AG04450 (cell line): ENCODE measurements at regions of chr10 and their contacts with region 1.

Region 1: DNA sequence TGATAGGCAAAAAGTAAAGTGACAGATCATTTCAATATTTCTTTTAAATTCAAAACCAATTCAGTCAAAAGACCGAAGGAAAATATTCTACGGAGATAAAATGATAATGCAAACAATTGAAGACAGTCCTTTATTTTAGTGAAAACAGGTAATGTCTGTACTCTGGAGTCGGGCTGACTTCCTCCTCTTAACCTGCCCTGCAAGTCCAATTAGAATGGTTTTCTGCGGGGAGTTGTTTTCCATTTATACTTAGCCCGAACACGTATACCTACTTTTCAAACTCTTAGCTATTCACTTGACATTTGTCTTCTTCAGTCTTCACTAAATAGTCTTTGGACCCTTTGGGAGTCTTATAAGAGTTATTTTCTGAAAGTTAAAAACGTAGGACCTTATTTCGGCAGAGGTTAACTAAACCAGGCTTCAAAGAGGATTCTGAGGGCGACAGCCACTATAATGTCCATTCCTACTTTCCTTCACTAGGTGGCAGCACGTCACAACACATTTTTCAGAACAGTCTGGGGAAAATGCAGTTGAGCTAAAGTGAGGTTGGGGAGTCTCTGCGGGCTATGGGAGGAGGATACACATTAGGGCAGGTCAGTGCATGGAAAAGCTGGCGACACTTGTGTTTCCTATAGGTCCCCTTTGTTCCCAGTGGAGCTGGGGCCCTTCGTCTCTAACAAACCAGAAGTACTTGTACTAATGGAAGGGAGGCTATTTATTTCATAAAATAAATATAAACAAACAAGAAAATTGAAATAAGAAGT is 472.0 kb downstream of the KCNMA1 start:
- DNase-seq: no peak
- H3K4me3 ChIP-seq: no peak overlapping the region
- H3K27ac ChIP-seq: no peak overlapping the region
- H3K27me3 ChIP-seq: no peaks in the 10 kb centered on the region
- CTCF ChIP-seq: peak; percentile 79

Region 2: GRCh38 chr10:76411729-76412435 is 753.7 kb before region 1 on chr10:
- CTCF ChIA-PET with region 1: no interaction called
- POLR2A ChIA-PET with region 1: no interaction called
- DNase-seq: no peak
- H3K4me3 ChIP-seq: no peak overlapping the region
- H3K27ac ChIP-seq: no peak overlapping the region
- H3K27me3 ChIP-seq: no peaks in the 10 kb centered on the region
- CTCF ChIP-seq: no peak

Region 3: DNA sequence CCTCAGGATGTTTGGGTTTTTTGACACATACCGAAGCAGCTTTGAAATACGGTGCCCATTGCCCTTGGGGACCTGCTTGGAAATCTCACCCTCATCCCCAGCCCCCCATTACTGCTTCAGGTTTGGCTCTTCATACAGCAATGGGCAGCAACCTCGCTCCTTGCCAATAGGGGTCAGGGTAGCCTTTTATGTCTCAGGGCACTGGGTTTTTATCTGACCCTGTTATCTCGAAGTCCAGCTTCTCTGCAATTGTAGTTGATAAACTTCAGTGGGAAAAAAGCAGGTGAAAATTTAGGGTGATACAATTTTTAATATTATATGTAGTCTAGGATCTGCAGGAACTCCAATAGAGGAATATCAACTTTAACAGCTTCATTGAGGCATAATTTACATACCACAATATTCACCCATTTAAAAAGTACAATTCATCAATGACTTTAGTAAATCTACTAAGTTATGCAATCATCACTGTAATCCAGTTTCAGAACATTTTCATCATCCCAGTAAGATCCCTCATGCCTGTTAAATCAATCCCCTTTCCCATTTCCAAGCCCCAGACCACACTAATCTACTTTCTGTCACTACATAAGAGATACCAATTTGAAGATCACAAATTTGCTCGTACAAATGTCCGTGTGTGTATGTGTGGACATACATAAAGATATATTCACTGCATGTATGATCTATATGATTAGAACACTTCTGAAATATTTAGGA is 85.8 kb after region 1 on chr10:
- CTCF ChIA-PET with region 1: interaction called, 13 read pairs
- POLR2A ChIA-PET with region 1: no interaction called
- DNase-seq: no peak
- H3K4me3 ChIP-seq: no peak overlapping the region
- H3K27ac ChIP-seq: no peak overlapping the region
- H3K27me3 ChIP-seq: no peaks in the 10 kb centered on the region
- CTCF ChIP-seq: peak; percentile 77

Region 4: DNA sequence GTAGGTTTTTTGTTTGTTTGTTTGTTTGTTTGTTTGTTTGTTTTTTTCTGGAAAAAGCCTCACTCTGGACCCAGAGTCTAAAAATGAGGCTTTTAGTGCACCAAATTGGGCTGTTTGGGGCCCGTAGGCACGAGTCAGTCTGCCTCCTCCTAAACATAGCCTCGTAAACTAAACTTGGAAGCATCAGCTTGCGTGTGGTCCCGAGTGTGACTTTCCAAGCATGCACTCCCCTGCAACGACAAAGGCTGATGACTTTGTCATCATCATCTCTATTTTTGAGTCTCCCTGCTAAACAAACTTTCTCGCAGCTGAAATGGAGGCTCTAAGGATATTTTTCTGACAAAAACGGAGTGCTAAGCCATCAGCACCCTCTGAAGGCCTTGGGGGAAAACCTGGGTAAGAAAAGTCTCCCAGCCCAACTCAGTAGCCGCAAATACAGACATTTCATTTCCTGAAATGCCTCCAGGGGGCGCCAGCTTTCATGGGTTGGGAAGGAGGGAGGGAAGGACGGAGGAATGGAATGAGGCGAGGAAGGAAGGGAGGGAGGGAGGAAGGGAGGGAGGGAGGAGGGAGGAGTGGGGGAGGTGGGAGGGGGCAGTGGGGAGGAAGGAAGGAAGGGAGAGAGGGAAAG is 226.1 kb after region 1 on chr10:
- CTCF ChIA-PET with region 1: interaction called, 24 read pairs
- POLR2A ChIA-PET with region 1: no interaction called
- DNase-seq: peak; percentile 73
- H3K4me3 ChIP-seq: no peak overlapping the region
- H3K27ac ChIP-seq: peak overlapping the region; percentile 78
- H3K27me3 ChIP-seq: no peaks in the 10 kb centered on the region
- CTCF ChIP-seq: peak; percentile 79

Region 5: DNA sequence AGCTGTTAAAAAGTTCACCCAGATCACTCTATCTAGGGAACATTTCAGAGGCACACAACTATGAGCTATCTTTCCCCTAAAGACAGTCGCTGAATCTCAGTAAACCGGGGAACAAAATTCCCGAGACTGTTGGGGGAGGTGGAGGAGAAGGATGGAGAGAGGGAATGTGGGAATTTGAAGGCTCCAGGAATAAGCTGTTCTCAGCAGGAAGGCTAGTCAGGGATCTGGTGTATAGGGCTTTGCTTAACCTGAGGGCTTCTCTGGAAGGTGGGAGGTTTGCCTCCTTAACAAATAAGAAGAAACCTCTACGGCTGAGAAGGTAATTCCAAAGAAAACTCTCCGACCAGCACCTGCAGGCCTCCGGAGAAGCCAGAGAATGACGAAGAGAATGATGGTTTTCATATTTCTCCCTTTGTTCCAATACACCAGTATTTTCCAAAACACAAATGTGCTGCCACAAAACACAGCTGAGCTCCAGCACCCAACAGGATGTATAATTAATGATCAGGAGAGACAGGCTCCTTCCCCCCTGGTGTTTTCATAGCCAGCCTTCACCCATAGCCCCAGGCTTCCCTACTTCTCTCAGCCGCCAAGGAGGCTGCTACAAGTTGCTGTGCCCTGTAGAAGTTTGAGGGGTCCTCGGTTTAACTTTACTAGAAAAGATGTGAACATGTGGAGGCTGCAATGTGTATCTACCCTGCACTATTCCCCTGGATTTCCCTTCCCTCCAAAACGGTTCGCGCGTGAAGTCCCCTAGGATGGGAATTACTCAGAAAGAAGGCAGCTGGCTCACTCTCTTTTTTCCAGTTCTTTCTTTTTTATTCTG is 470.0 kb after region 1 on chr10:
- CTCF ChIA-PET with region 1: interaction called, 199 read pairs
- POLR2A ChIA-PET with region 1: interaction called, 3 read pairs
- DNase-seq: no peak
- H3K4me3 ChIP-seq: peak overlapping the region; percentile 91
- H3K27ac ChIP-seq: peak overlapping the region; percentile 21
- H3K27me3 ChIP-seq: no peaks in the 10 kb centered on the region
- CTCF ChIP-seq: no peak

Region 6: GRCh38 chr10:77692782-77693181 is 527.2 kb after region 1 on chr10:
- CTCF ChIA-PET with region 1: interaction called, 11 read pairs
- POLR2A ChIA-PET with region 1: no interaction called
- DNase-seq: peak; percentile 63
- H3K4me3 ChIP-seq: no peak overlapping the region
- H3K27ac ChIP-seq: no peak overlapping the region
- H3K27me3 ChIP-seq: peaks cover 26% of the 10 kb centered on the region
- CTCF ChIP-seq: peak; percentile 39

Region 7: DNA sequence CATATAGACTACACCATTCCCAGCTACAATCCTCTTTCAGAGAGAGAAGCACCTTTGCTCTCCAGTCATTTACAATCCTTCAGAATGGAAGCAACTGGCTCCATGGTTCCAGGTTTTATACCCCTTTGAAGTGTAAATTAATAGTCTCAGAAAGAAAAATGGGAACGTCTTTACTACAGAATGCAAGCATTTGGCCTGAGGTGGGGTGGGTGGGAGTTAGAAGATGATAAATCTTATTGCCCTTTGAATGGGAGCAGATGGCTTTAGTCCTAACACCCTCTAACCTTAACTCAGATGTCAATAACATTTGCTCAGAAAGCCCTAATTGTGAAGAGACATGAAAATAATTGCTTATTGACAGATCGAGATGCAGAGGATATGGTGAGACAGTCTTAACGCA is 556.2 kb after region 1 on chr10:
- CTCF ChIA-PET with region 1: interaction called, 10 read pairs
- POLR2A ChIA-PET with region 1: no interaction called
- DNase-seq: no peak
- H3K4me3 ChIP-seq: no peak overlapping the region
- H3K27ac ChIP-seq: no peak overlapping the region
- H3K27me3 ChIP-seq: no peaks in the 10 kb centered on the region
- CTCF ChIP-seq: no peak